CD14-positive monocyte (primary cell): ENCODE measurements at regions of chr13 and their contacts with region 1.

Region 1: DNA sequence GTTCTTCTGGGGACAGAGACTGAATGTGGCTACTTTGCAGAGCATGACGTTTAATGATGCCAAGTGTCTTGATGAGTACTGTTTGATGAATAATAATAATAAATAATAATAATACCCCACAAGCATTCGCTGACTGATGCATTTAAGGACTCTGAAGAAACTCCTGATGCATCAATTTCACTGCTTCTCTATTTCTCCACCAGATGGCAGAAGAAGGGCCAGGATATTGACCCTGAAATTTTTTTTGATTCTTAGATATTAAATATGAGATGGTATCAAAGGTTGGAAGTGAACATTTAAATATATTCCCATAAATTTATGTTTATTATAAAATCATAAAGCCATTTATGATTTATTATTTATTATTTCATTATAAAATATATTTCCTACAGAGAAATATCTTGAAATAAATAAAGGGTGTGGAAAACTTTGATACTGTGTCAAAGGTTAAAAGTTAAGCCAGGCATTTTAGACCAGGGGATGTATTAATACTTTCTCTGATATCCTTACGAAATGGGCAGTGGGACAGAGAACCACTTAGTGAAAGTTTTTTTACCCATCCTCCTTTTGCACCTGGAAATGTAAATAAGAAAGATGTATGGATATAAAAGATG is 170.9 kb downstream of the LACC1 start:
- DNase-seq: peak in 2 of 3 donors; percentile 7 to 20
- H3K4me3 ChIP-seq: no peak overlapping the region
- H3K4me3 Mint-ChIP-seq: no peak overlapping the region
- H3K27ac ChIP-seq: no peak overlapping the region
- H3K27ac Mint-ChIP-seq: no peak overlapping the region
- H3K4me1 ChIP-seq: no peaks in the 10 kb centered on the region
- H3K4me1 Mint-ChIP-seq: peaks cover 9% of the 10 kb centered on the region
- H3K27me3 ChIP-seq: no peaks in the 10 kb centered on the region
- H3K27me3 Mint-ChIP-seq: peaks cover 0 to 4% (median 2%) of the 10 kb centered on the region in 3 donors
- CTCF ChIP-seq: peak; percentile 78

Region 2: GRCh38 chr13:43915451-43915850 is 135.1 kb before region 1 on chr13:
- intact Hi-C with region 1: loop called (anchors 10 kb)
- DNase-seq: no peak
- H3K4me3 ChIP-seq: no peak overlapping the region
- H3K4me3 Mint-ChIP-seq: peak overlapping the region in 1 of 2 donors; percentile 67
- H3K27ac ChIP-seq: no peak overlapping the region
- H3K27ac Mint-ChIP-seq: no peak overlapping the region
- H3K4me1 ChIP-seq: no peaks in the 10 kb centered on the region
- H3K4me1 Mint-ChIP-seq: peaks cover 6% of the 10 kb centered on the region
- H3K27me3 ChIP-seq: peaks cover 92 to 99% of the 10 kb centered on the region in 2 donors
- H3K27me3 Mint-ChIP-seq: peaks cover 81 to 92% (median 83%) of the 10 kb centered on the region in 3 donors
- CTCF ChIP-seq: no peak